ENCODE measurements at regions of chr7 and their contacts with region 1.

Region 1: DNA sequence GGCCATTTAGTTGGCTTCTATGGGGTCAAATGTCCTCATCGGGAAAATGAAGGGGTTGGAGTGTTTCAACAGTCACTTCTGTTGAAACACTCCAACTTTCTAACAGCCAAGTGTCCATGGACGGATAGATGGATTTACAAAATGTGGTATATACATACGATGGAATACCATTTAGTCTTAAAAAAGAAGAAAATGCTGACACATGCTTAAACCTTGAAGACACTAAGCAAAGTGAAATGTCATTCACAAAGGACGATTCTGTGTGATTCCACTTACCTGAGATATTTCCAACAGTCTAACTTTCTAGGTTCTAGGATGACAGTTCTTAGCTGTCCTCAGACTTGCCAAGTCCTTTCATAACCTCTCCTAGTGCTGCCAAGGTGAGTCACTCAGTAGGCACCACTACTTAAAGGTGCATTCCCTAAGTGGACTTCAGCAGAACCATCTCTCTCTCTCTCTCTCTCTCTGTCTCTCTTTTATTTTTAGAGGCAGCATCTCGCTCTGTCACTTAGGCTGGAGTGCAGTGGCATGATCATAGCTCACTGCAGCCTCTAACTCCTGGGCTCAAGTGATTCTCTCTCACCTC is 69.0 kb downstream of the DENND2A start:
- DNase-seq: no peak
- H3K4me3 ChIP-seq: no peak overlapping the region
- H3K27ac ChIP-seq: no peak overlapping the region
- H3K4me1 ChIP-seq: no peaks in the 10 kb centered on the region
- H3K27me3 ChIP-seq: no peaks in the 10 kb centered on the region
- CTCF ChIP-seq: no peak
- POLR2A ChIP-seq: no peak

Region 2: GRCh38 chr7:141722529-141722928 is 1150.9 kb after region 1 on chr7:
- intact Hi-C with region 1: loop called (anchors 5 kb)
- DNase-seq: no peak
- H3K4me3 ChIP-seq: no peak overlapping the region
- H3K27ac ChIP-seq: no peak overlapping the region
- H3K4me1 ChIP-seq: no peaks in the 10 kb centered on the region
- H3K27me3 ChIP-seq: no peaks in the 10 kb centered on the region
- CTCF ChIP-seq: no peak
- POLR2A ChIP-seq: no peak